Activated CD8-positive, alpha-beta T cell treated with anti-CD3 and anti-CD28 coated beads for 36 hours (primary cell): ENCODE measurements at regions of chr16 and their contacts with region 1.

Region 1: GRCh38 chr16:68512183-68512582 is 26.9 kb upstream of the ZFP90 start:
- DNase-seq: no peak
- ATAC-seq: no peak
- H3K4me3 Mint-ChIP-seq: no peak overlapping the region
- H3K27ac Mint-ChIP-seq: no peak overlapping the region
- H3K4me1 Mint-ChIP-seq: no peaks in the 10 kb centered on the region
- H3K27me3 Mint-ChIP-seq: no peaks in the 10 kb centered on the region
- CTCF ChIP-seq: no peak

Region 2: DNA sequence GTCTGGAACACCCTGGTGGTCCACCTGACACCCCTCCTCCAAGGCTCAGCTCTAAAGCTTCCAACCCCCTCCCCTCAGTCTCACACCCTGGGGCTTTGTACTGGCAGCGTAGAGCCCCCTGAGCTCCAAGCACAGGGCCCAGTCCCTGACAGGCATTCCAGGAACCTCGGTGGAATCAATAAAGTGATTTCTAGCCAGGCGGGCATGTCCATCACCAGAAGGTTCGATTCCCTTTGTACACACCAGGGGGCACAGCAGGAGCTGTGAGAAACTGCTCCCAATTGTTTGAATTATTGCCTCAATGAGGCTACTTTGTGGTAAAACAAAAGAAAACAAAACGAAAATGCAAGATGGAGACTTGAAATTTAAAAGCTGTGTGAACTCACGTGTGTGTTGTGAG is 115.7 kb before region 1 on chr16:
- CTCF ChIA-PET with region 1: interaction called, 47 read pairs
- POLR2A ChIA-PET with region 1: no interaction called
- intact Hi-C with region 1: loop called (anchors 5 kb)
- DNase-seq: peak; percentile 68
- ATAC-seq: peak; percentile 77
- H3K4me3 Mint-ChIP-seq: no peak overlapping the region
- H3K27ac Mint-ChIP-seq: no peak overlapping the region
- H3K4me1 Mint-ChIP-seq: peaks cover 7% of the 10 kb centered on the region
- H3K27me3 Mint-ChIP-seq: no peaks in the 10 kb centered on the region
- CTCF ChIP-seq: peak; percentile 60

Region 3: GRCh38 chr16:68417711-68418301 is 94.4 kb before region 1 on chr16:
- CTCF ChIA-PET with region 1: interaction called, 11 read pairs
- POLR2A ChIA-PET with region 1: no interaction called
- intact Hi-C with region 1: no loop called
- DNase-seq: peak; percentile 84
- ATAC-seq: peak; percentile 93
- H3K4me3 Mint-ChIP-seq: peak overlapping the region; percentile 63
- H3K27ac Mint-ChIP-seq: peak overlapping the region; percentile 90
- H3K4me1 Mint-ChIP-seq: peaks cover 34% of the 10 kb centered on the region
- H3K27me3 Mint-ChIP-seq: no peaks in the 10 kb centered on the region
- CTCF ChIP-seq: no peak

Region 4: DNA sequence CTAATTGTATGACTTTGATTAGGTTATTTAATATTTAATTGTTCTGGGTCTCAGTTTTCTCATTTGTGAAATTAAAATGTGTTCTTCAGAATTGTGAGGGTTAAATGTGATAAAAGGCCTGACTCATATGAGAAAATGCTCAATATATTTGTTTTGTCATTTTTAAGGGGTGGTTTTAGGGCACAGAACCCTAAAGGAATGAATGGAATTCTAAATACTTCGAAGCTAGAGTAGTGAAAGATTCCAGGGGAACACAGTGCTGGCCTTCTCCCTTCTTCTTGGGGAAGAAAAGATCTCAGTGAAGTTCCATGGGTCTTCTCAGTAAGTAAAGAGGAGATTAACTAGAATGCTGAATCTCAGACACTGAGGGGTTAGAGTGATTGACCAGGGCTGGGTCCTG is 60.0 kb before region 1 on chr16:
- CTCF ChIA-PET with region 1: interaction called, 12 read pairs
- POLR2A ChIA-PET with region 1: no interaction called
- intact Hi-C with region 1: no loop called
- DNase-seq: no peak
- ATAC-seq: no peak
- H3K4me3 Mint-ChIP-seq: no peak overlapping the region
- H3K27ac Mint-ChIP-seq: no peak overlapping the region
- H3K4me1 Mint-ChIP-seq: peaks cover 12% of the 10 kb centered on the region
- H3K27me3 Mint-ChIP-seq: peaks cover 2% of the 10 kb centered on the region
- CTCF ChIP-seq: no peak

Region 5: DNA sequence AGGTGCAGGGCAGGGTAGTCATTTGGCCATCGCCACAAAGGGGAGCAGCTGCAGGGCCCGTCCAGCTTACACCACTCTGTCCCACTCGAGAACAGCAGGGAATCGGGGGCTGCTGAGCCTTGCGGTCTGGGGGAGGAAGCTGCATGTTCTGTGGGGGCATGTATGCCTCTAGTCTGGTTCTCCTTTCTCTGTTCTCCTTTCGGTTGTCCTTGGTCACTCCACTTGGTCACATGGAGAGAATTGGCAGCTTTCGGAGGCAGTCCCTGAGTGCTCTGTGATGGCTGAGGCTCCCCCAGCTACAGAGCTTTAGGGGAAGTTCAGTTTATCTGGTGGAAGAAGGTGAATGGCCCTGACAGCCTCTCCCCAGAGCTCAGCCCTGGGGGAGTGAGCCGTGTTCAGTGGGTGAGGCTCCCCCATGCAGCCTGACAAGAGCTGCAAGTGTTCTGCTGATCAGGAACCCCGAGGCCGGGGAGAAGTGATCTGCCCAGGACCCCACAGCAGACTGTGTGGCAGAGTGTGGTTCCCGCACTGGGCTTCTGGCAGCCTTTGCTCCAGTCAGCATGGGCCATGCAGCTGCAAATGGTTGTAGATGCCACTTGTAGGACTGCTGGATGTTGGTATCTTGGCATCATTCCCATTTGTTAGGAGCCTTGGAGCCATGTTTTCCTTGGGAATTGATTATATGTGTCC is 41.6 kb before region 1 on chr16:
- CTCF ChIA-PET with region 1: interaction called, 15 read pairs
- POLR2A ChIA-PET with region 1: no interaction called
- intact Hi-C with region 1: no loop called
- DNase-seq: peak; percentile 32
- ATAC-seq: peak; percentile 74
- H3K4me3 Mint-ChIP-seq: peak overlapping the region; percentile 72
- H3K27ac Mint-ChIP-seq: peak overlapping the region; percentile 88
- H3K4me1 Mint-ChIP-seq: peaks cover 38% of the 10 kb centered on the region
- H3K27me3 Mint-ChIP-seq: no peaks in the 10 kb centered on the region
- CTCF ChIP-seq: no peak